ENCODE measurements at regions of chr5 and their contacts with region 1.

Region 1: GRCh38 chr5:55421074-55421529 is 113.3 kb downstream of the MTREX start:
- DNase-seq: no peak
- H3K4me3 Mint-ChIP-seq: no peak overlapping the region
- H3K27ac Mint-ChIP-seq: peak overlapping the region; percentile 65
- H3K4me1 Mint-ChIP-seq: peaks cover 27% of the 10 kb centered on the region
- H3K27me3 Mint-ChIP-seq: no peaks in the 10 kb centered on the region

Region 2: GRCh38 chr5:55338810-55339243 is 82.3 kb before region 1 on chr5:
- intact Hi-C with region 1: loop called (anchors 1 kb)
- DNase-seq: no peak
- H3K4me3 Mint-ChIP-seq: no peak overlapping the region
- H3K27ac Mint-ChIP-seq: peak overlapping the region; percentile 70
- H3K4me1 Mint-ChIP-seq: peaks cover 14% of the 10 kb centered on the region
- H3K27me3 Mint-ChIP-seq: no peaks in the 10 kb centered on the region

Region 3: GRCh38 chr5:55439008-55439407 is 17.9 kb after region 1 on chr5:
- intact Hi-C with region 1: loop called (anchors 2 kb)
- DNase-seq: no peak
- H3K4me3 Mint-ChIP-seq: no peak overlapping the region
- H3K27ac Mint-ChIP-seq: peak overlapping the region; percentile 44
- H3K4me1 Mint-ChIP-seq: peaks cover 46% of the 10 kb centered on the region
- H3K27me3 Mint-ChIP-seq: no peaks in the 10 kb centered on the region

Region 4: DNA sequence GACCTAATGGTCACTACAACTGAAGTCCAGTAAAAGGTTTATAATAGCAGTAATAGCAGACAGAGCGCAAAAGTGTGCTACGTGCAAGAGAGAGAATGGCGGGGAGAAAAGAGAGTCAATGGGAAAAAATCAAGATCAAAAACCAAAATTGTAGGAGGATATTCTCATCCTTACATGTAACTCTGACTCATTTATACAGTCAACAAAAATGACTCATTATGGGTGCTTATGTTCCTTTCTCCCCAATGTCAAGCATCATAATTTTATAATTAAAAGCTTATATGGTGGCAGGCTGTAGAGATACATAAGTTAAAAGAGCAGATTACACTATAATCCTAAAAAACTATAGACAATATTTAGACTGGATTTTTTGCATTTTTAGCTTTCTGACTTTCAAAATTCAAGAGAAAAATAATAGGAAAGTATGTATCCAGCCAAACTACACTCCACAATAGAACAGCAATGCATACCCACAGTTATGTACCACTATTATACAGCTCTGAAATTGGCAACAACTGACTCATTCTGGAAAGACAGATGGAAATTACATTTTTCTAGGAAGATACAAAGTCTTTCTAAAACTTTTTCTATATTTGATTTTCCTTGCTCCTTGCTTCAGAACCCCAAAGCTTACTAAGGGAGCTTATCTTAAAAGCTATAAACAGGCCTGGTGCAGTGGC is 35.3 kb after region 1 on chr5:
- intact Hi-C with region 1: loop called (anchors 5 kb)
- DNase-seq: no peak
- H3K4me3 Mint-ChIP-seq: no peak overlapping the region
- H3K27ac Mint-ChIP-seq: peak overlapping the region; percentile 63
- H3K4me1 Mint-ChIP-seq: peaks cover 25% of the 10 kb centered on the region
- H3K27me3 Mint-ChIP-seq: no peaks in the 10 kb centered on the region